ENCODE measurements at regions of chr1 and their contacts with region 1.

Region 1: DNA sequence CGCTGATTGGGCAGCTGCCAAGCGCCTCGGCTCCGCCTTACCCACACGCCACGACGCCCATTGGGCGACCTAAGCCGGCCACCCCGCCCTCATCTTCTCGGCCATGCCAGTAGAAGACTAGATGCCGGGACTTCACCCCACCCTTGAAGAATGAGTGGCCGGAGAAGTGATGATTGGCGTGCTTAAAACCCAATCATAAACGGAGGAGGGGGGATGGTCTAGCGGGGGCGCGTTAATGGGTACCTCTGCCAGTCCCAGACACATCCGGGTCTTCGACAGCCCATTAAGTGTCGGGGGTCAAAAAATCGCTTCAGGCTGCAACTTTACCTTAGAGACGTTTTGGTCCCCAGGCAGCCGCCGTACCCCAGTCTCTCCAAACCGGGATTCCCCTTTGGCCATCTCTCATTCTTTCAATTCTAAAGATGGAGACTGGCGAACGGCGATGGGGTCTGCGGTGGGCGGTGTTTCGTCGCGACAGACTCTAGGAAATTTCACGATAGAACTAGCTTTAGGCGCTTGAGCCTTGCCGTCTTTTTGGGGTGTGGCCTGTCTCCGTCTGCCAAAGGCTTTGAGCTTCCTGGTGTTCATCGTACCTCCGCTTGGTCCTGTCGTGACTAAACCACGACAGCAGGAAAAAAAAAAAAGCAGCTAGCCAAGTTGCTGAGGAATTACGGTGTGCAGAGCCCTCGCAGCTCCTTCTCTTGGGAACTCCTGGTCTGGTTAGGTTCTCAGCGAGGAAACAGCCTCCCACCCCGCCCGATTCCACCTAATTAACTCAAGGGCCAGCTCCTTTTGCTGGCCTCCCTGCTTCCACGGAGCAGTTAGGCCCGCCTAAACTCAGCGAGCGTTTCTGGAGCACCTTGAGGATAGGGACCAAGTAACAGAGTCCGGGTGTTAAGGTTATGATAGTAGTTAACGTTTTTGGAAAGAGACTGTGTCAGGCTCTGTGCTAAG is at the start of gene GATAD2B:
- DNase-seq: peak; percentile 99
- H3K4me3 Mint-ChIP-seq: peak within 1 kb of the TSS; percentile 92
- H3K27ac Mint-ChIP-seq: peak within 1 kb of the TSS; percentile 88
- H3K4me1 Mint-ChIP-seq: peaks cover 42% of the 10 kb centered on the region
- H3K27me3 Mint-ChIP-seq: no peaks in the 10 kb centered on the region
- total RNA-seq, gene GATAD2B: 70.8 to 71.1 TPM

Region 2: DNA sequence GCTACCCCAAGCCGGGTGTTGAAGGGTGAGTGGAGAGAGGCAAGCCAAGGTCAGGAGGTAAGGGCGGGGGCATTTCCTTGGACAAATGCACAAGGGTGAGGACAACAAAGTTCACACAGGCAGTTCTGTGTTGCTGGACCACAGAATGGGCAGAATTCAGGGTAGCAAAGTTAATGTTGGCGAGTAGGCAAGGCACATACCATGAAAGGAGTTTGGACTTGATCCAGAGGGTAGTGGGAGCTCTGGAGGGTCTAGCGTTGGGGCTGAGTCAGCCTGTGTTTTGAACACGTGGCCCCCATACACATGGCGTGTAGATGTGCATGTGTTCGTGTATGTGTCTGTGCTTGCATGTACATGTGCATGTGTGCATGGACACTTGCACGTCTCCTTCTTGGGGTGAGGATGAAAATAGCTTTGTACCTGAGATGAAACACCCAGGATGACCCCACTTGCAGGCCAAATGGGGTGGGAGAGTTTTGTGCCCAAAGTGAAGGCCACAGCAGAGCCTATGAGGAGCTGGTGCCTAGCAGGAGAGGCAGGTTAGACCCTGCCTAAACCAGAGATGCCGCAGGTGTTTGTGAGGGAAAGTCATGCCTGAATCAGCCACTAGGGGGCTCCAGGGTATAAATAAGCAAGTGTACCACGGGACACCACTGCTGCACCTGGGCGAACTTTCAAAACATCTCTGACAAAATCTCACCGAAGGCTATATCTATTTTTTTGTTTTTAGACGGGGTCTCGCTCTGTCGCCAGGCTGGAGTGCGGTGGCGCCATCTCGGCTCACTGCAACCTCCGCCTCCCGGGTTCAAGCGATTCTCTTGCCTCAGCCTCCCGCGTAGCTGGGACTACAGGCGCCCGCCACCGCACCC is 126.2 kb before region 1 on chr1:
- CTCF ChIA-PET with region 1: interaction called, 5 read pairs
- POLR2A ChIA-PET with region 1: interaction called, 14 read pairs
- DNase-seq: peak; percentile 86
- H3K4me3 Mint-ChIP-seq: no peak overlapping the region
- H3K27ac Mint-ChIP-seq: peak overlapping the region; percentile 44
- H3K4me1 Mint-ChIP-seq: peaks cover 23% of the 10 kb centered on the region
- H3K27me3 Mint-ChIP-seq: no peaks in the 10 kb centered on the region

Region 3: GRCh38 chr1:153958111-153958960 is 35.1 kb after region 1 on chr1 and contains the start of gene CRTC2:
- CTCF ChIA-PET with region 1: interaction called, 5 read pairs
- POLR2A ChIA-PET with region 1: interaction called, 25 read pairs
- DNase-seq: peak; percentile 99
- H3K4me3 Mint-ChIP-seq: peak within 1 kb of the TSS; percentile 96
- H3K27ac Mint-ChIP-seq: peak within 1 kb of the TSS; percentile 95
- H3K4me1 Mint-ChIP-seq: peaks cover 60% of the 10 kb centered on the region
- H3K27me3 Mint-ChIP-seq: no peaks in the 10 kb centered on the region
- total RNA-seq, gene CRTC2: 107 TPM

Region 4: GRCh38 chr1:153967082-153968000 is 44.1 kb after region 1 on chr1 and contains the start of gene CREB3L4:
- CTCF ChIA-PET with region 1: interaction called, 10 read pairs
- POLR2A ChIA-PET with region 1: interaction called, 51 read pairs
- DNase-seq: peak; percentile 87
- H3K4me3 Mint-ChIP-seq: peak within 1 kb of the TSS; percentile 80
- H3K27ac Mint-ChIP-seq: peak within 1 kb of the TSS; percentile 84
- H3K4me1 Mint-ChIP-seq: peaks cover 63% of the 10 kb centered on the region
- H3K27me3 Mint-ChIP-seq: no peaks in the 10 kb centered on the region
- total RNA-seq, gene CREB3L4: 7.0 to 8.4 TPM

Region 5: GRCh38 chr1:153977250-153978240 is 54.3 kb after region 1 on chr1 and contains the start of gene JTB:
- CTCF ChIA-PET with region 1: interaction called, 3 read pairs
- POLR2A ChIA-PET with region 1: interaction called, 53 read pairs
- DNase-seq: peak; percentile 89
- H3K4me3 Mint-ChIP-seq: peak within 1 kb of the TSS; percentile 97
- H3K27ac Mint-ChIP-seq: peak within 1 kb of the TSS; percentile 89
- H3K4me1 Mint-ChIP-seq: peaks cover 49% of the 10 kb centered on the region
- H3K27me3 Mint-ChIP-seq: no peaks in the 10 kb centered on the region
- total RNA-seq, gene JTB: 120 to 127 TPM